IMR-90 (cell line): ENCODE measurements at regions of chr14 and their contacts with region 1.

Region 1: DNA sequence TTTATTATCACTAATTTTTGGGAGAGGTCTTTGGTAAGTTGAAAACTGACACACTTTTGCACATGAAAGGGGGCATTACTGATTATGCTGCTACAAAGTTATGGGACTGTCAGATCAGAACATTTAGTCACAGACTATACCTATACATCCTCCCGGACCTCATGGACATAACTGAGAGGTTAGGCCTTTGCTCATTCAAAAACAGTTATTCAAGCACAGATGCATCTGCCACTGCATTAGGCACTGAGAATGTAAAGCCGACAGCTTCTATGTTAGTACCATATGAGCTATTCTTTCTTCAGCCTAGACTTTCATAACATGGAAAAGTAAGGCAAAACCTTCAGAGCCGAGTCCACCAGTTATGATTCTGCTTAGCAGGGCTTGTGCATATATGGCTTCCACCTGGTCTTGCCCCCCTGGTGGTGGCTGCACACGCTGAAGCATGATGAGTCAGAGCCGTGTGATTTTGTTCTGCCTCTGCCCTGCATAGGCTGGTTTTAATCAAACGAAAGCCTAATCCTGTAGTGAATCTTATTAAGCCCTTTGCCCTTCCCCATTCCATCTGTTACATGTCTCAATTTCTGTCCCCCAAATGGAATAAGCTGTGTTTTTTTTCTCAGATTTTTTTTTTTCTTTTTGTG is 21.8 kb upstream of the RNU6-8 start:
- DNase-seq: peak; percentile 54
- ATAC-seq: peak; percentile 84
- H3K4me3 ChIP-seq: no peak overlapping the region
- H3K27ac ChIP-seq: no peak overlapping the region
- H3K4me1 ChIP-seq: no peaks in the 10 kb centered on the region
- H3K27me3 ChIP-seq: no peaks in the 10 kb centered on the region; the same call in 1 of the 2 replicates
- CTCF ChIP-seq: peak; percentile 39
- POLR2A ChIP-seq: no peak
- RAD21 ChIP-seq: no peak

Region 2: GRCh38 chr14:30822080-30822571 is 1402.7 kb before region 1 on chr14:
- CTCF ChIA-PET with region 1: no interaction called
- POLR2A ChIA-PET with region 1: no interaction called
- dilution Hi-C with region 1: no loop called
- in situ Hi-C with region 1: no loop called
- intact Hi-C with region 1: no loop called
- DNase-seq: no peak
- ATAC-seq: no peak
- H3K4me3 ChIP-seq: no peak overlapping the region
- H3K27ac ChIP-seq: no peak overlapping the region
- H3K4me1 ChIP-seq: no peaks in the 10 kb centered on the region
- H3K27me3 ChIP-seq: peaks cover 2% of the 10 kb centered on the region
- CTCF ChIP-seq: no peak
- POLR2A ChIP-seq: no peak
- RAD21 ChIP-seq: no peak

Region 3: GRCh38 chr14:31937721-31938346 is 287.0 kb before region 1 on chr14:
- CTCF ChIA-PET with region 1: no interaction called
- POLR2A ChIA-PET with region 1: no interaction called
- dilution Hi-C with region 1: no loop called
- in situ Hi-C with region 1: loop called (anchors 25 kb)
- intact Hi-C with region 1: no loop called
- DNase-seq: peak; percentile 86
- ATAC-seq: peak; percentile 85
- H3K4me3 ChIP-seq: no peak overlapping the region
- H3K27ac ChIP-seq: no peak overlapping the region
- H3K4me1 ChIP-seq: no peaks in the 10 kb centered on the region
- H3K27me3 ChIP-seq: peaks cover 2% of the 10 kb centered on the region; the same call in 1 of the 2 replicates
- CTCF ChIP-seq: no peak
- POLR2A ChIP-seq: no peak
- RAD21 ChIP-seq: no peak

Region 4: DNA sequence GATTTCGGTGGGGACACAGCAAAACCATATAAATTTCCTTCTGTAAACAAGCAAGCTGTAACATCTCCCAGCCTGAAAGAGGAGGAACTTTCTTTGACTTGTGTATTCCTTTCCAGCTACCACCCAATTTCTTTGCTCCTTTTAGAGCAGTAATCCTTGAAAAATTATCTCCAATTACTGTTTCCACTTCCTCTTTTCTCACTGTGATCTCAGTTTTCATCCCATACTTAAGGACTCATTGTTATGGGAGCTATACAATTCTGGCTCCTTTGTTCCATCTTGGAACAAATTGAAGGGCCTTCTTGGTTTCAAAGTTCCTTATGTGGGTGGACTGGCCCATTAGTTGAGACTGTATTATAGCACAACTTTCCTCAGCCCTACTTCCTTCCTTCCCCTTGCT is 256.9 kb after region 1 on chr14:
- CTCF ChIA-PET with region 1: no interaction called
- POLR2A ChIA-PET with region 1: no interaction called
- dilution Hi-C with region 1: no loop called
- in situ Hi-C with region 1: no loop called
- intact Hi-C with region 1: no loop called
- DNase-seq: no peak
- ATAC-seq: no peak
- H3K4me3 ChIP-seq: no peak overlapping the region
- H3K27ac ChIP-seq: no peak overlapping the region
- H3K4me1 ChIP-seq: peaks cover 18% of the 10 kb centered on the region
- H3K27me3 ChIP-seq: no peaks in the 10 kb centered on the region
- CTCF ChIP-seq: no peak
- POLR2A ChIP-seq: no peak
- RAD21 ChIP-seq: no peak